ENCODE measurements at regions of chr7 and their contacts with region 1.

Region 1: DNA sequence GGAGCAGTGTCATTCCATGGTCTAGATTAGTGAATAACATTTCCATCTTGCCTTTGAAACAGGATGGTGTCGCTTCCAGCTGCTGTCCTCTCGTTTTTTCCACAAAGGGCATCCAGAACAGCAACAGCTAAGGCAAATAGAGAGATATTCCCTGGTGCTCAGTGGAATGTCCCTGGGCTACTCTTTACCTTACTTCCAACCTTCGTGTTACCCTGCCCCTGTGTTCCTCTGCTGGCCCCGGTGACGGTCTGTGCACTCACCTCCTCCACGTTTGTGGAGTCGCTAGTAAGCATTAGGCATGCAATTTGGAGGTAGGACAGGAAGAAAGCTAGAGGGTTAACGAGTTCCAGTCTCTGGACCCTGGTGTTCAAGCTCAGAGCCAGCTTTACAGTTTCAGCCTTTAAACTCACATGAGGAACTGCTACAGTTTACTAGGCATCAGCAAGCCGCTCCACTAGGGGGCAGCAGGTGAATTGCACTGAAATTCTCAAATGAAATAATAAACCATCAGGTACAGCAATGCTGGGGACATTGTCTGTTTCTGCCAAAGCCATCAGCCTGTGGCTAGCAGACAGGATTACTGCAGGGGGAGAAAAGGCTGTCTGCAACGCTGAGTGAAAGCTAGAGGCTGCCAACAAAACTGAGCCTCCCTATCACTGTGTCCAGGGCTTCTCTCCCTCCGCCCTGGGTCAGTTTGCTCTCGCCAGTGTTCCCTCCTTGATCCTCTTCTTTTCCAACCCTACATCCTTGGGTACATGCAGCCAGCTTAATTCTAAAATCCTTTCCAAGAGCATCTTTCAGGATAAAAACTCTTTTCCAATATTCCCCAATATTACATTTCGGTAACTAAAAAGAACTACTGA is 9.0 kb downstream of the MRPL32 start:
- DNase-seq: peak; percentile 79
- ATAC-seq: peak; percentile 90
- H3K4me3 ChIP-seq: no peak overlapping the region
- H3K27ac ChIP-seq: no peak overlapping the region
- H3K4me1 ChIP-seq: no peaks in the 10 kb centered on the region
- H3K27me3 ChIP-seq: no peaks in the 10 kb centered on the region
- CTCF ChIP-seq: peak; percentile 93

Region 2: DNA sequence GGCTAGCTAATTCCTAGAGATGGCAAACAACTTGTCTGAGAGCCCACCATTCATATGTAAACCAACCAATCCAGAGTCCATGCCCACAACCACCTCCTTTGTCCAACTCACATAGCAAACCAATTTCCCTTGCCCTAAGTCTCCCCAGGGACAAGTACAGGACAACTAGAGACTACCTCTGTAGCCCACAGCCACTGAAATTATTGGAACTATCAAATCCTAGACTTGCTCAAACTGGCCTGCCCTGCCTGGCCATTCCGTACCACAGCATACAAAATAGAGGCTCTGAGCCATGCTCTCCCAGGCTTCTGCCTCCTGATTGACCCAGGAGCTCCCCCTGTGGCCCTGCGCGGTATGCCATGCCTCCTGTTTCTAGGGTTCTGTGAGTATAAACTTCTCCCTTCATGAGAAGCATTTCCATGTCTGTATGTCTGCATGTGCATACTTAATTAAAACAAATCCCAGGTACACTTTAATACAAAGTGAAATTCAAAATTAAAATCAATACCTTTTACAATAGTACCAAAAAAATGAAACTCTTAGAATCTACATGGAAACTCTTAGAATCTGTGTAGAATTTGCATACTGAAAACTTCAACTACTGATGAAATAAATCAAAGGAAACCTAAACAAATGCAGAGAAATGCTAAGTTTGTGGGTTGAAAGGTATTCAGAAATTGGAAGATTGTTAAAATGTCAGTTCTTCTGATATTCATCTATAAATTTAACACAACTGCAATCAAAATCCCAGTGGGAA is 167.2 kb after region 1 on chr7:
- CTCF ChIA-PET with region 1: interaction called, 7 read pairs
- POLR2A ChIA-PET with region 1: no interaction called
- intact Hi-C with region 1: loop called (anchors 1 kb)
- DNase-seq: peak; percentile 79
- ATAC-seq: peak; percentile 87
- H3K4me3 ChIP-seq: no peak overlapping the region
- H3K27ac ChIP-seq: no peak overlapping the region
- H3K4me1 ChIP-seq: no peaks in the 10 kb centered on the region
- H3K27me3 ChIP-seq: peaks cover 27% of the 10 kb centered on the region
- CTCF ChIP-seq: peak; percentile 90

Region 3: DNA sequence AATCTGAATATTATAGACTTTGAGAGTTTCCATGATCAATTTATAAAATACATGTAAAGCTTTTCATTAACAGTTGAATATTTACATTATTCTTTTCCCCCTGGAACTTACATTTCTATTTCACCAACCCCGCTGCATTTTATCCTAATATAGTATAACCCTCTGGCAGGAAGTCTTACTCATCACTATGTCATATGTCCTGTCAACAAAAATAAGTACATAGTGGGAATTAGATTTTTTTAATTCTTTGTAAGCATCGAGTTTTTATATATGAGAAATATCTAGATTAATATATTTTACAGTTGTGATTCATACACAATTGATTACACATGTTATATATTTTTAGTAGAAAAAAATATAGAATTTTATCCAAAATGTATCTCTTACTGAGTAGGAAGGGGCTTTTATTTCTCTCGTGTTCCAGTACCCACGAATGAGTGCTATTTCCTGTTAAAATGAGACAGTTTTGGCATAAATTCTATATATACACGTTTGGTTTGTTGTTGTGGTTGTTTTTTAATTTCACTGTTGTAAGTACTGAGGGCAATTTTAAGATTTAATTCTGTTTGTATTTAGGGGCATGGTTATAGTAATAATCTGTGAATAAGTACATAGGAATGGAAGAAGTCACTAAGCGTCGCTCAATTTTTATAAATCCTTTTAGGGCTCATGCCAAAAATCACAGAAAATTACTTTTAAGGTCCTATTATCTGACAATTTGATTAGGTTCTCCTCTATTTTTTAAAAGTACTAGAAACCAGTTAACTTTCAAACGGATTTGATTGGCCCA is 258.4 kb after region 1 on chr7:
- CTCF ChIA-PET with region 1: no interaction called
- POLR2A ChIA-PET with region 1: no interaction called
- intact Hi-C with region 1: loop called (anchors 5 kb)
- DNase-seq: peak; percentile 61
- ATAC-seq: peak; percentile 84
- H3K4me3 ChIP-seq: peak overlapping the region; percentile 15; the same call in 1 of the 2 replicates
- H3K27ac ChIP-seq: peak overlapping the region; percentile 24
- H3K4me1 ChIP-seq: peaks cover 32% of the 10 kb centered on the region
- H3K27me3 ChIP-seq: no peaks in the 10 kb centered on the region
- CTCF ChIP-seq: no peak

Region 4: GRCh38 chr7:43454936-43455518 is 513.8 kb after region 1 on chr7:
- CTCF ChIA-PET with region 1: interaction called, 7 read pairs
- POLR2A ChIA-PET with region 1: no interaction called
- intact Hi-C with region 1: loop called (anchors 2 kb)
- DNase-seq: peak; percentile 66
- ATAC-seq: peak; percentile 67
- H3K4me3 ChIP-seq: peak overlapping the region; percentile 26; the same call in 1 of the 2 replicates
- H3K27ac ChIP-seq: no peak overlapping the region
- H3K4me1 ChIP-seq: no peaks in the 10 kb centered on the region
- H3K27me3 ChIP-seq: no peaks in the 10 kb centered on the region
- CTCF ChIP-seq: peak; percentile 81

Measured in PC-3 (cell line).